T-cell (primary cell): ENCODE measurements at regions of chr3 and their contacts with region 1.

Region 1: GRCh38 chr3:101561630-101562328 is at the start of gene TRMT10C:
- DNase-seq: peak; percentile 81 to 96 (median 92)
- ATAC-seq: peak; percentile 95 to 98 (median 97)
- H3K4me3 ChIP-seq: peak within 1 kb of the TSS; percentile 78 to 96
- H3K4me3 Mint-ChIP-seq: peak within 1 kb of the TSS; percentile 92 to 98 (median 97)
- H3K27ac ChIP-seq: peak within 1 kb of the TSS; percentile 86
- H3K27ac Mint-ChIP-seq: peak within 1 kb of the TSS; percentile 95 to 96
- H3K4me1 ChIP-seq: peaks cover 12 to 13% of the 10 kb centered on the region in 2 experiments
- H3K4me1 Mint-ChIP-seq: peaks cover 34 to 37% (median 34%) of the 10 kb centered on the region in 3 donors
- H3K27me3 ChIP-seq: peaks cover 0 to 4% of the 10 kb centered on the region in 2 experiments
- H3K27me3 Mint-ChIP-seq: peaks cover 2 to 6% of the 10 kb centered on the region in 2 donors
- total RNA-seq, gene TRMT10C: 21.4 to 33.3 (median 22.2) TPM

Region 2: GRCh38 chr3:101518421-101518871 is 43.3 kb before region 1 on chr3:
- CTCF ChIA-PET with region 1: interaction called, 4 to 6 read pairs
- POLR2A ChIA-PET with region 1: interaction called, 3 to 15 read pairs
- DNase-seq: peak in 33 of 35 experiments; percentile 6 to 82 (median 31)
- ATAC-seq: peak; percentile 88 to 93 (median 90)
- H3K4me3 ChIP-seq: no peak overlapping the region
- H3K4me3 Mint-ChIP-seq: peak overlapping the region; percentile 31 to 55 (median 42)
- H3K27ac ChIP-seq: peak overlapping the region; percentile 97
- H3K27ac Mint-ChIP-seq: peak overlapping the region; percentile 95 to 96
- H3K4me1 ChIP-seq: peaks cover 42 to 63% of the 10 kb centered on the region in 2 experiments
- H3K4me1 Mint-ChIP-seq: peaks cover 65 to 71% (median 70%) of the 10 kb centered on the region in 3 donors
- H3K27me3 ChIP-seq: no peaks in the 10 kb centered on the region
- H3K27me3 Mint-ChIP-seq: no peaks in the 10 kb centered on the region

Region 3: GRCh38 chr3:101758224-101758623 is 196.4 kb after region 1 on chr3:
- CTCF ChIA-PET with region 1: no interaction called
- POLR2A ChIA-PET with region 1: no interaction called
- DNase-seq: peak in 1 of 35 experiments; percentile 23
- ATAC-seq: no peak
- H3K4me3 ChIP-seq: no peak overlapping the region
- H3K4me3 Mint-ChIP-seq: no peak overlapping the region
- H3K27ac ChIP-seq: no peak overlapping the region
- H3K27ac Mint-ChIP-seq: no peak overlapping the region
- H3K4me1 ChIP-seq: peaks cover 0 to 5% of the 10 kb centered on the region in 2 experiments
- H3K4me1 Mint-ChIP-seq: peaks cover 24 to 28% (median 27%) of the 10 kb centered on the region in 3 donors
- H3K27me3 ChIP-seq: no peaks in the 10 kb centered on the region
- H3K27me3 Mint-ChIP-seq: no peaks in the 10 kb centered on the region